Activated B cell treated with CpG ODN at 0.5 μM for 24 hours (primary cell): ENCODE measurements at regions of chr6 and their contacts with region 1.

Region 1: GRCh38 chr6:33200219-33201146 is at the starts of genes RXRB and SLC39A7:
- DNase-seq: peak; percentile 89
- ATAC-seq: peak; percentile 74
- H3K4me3 Mint-ChIP-seq: peak within 1 kb of the TSS; percentile 99
- H3K27ac Mint-ChIP-seq: peak within 1 kb of the TSS; percentile 96
- H3K4me1 Mint-ChIP-seq: peaks cover 75% of the 10 kb centered on the region
- H3K27me3 Mint-ChIP-seq: no peaks in the 10 kb centered on the region
- CTCF ChIP-seq: no peak
- total RNA-seq, gene RXRB: 72.4 and 74.3 TPM in 2 replicates
- total RNA-seq, gene SLC39A7: 31.7 and 35.2 TPM in 2 replicates

Region 2: GRCh38 chr6:31971993-31972708 is 1228.3 kb before region 1 on chr6 and contains the start of gene DXO:
- CTCF ChIA-PET with region 1: no interaction called
- POLR2A ChIA-PET with region 1: no interaction called
- intact Hi-C with region 1: loop called (anchors 10 kb)
- DNase-seq: peak; percentile 96
- ATAC-seq: peak; percentile 89
- H3K4me3 Mint-ChIP-seq: peak within 1 kb of the TSS; percentile 98
- H3K27ac Mint-ChIP-seq: peak within 1 kb of the TSS; percentile 100
- H3K4me1 Mint-ChIP-seq: peaks cover 39% of the 10 kb centered on the region
- H3K27me3 Mint-ChIP-seq: no peaks in the 10 kb centered on the region
- CTCF ChIP-seq: no peak
- total RNA-seq, gene DXO: 23.7 and 29.4 TPM in 2 replicates

Region 3: DNA sequence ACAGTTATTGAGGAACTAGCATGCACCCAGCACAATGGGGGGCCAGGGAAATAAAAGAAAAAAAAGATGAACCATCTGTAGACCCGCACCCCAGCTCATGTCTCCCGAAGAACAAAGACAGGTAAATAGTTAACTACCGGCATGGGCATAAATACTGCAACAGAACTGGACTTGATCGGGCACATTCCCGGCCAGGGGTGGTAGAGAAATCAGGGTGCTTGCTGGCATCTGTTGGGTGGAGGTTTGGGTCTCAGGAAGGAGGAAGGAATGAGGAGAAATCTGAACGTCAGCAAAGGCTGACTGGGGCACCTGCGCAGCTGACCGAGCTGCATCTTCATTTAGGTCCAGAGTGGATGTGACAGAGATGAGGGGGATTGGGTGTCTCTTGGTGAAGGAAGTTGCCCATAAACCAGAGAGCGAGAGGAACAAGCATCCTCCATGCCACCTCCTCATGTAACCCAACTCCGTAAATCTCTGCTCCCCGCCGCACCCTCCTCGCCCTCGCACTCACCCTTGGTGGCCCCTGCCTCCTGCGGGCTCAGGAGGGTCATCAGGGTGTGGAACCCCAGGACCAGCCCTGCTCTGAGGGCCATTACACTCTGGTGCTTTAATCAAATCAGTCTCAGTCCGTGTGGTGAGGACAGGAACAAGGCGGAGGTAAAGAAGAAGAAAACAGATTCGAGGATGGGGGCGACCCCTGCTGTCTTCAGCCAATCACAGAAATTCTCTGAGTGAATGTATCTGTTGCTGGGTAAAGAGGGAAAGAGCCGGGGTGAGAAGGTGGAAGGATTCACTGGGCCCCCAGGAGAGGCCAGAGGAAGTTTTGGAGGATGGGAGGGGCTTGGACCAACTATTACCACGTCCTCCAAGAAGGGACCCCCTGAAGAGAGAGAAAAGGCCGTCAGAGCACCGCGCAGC is 191.3 kb before region 1 on chr6 and contains the start of gene HLA-DOA:
- CTCF ChIA-PET with region 1: interaction called, 3 read pairs
- POLR2A ChIA-PET with region 1: interaction called, 4 read pairs
- intact Hi-C with region 1: loop called (anchors 2 kb)
- DNase-seq: peak; percentile 61
- ATAC-seq: peak; percentile 95
- H3K4me3 Mint-ChIP-seq: peak within 1 kb of the TSS; percentile 98
- H3K27ac Mint-ChIP-seq: peak within 1 kb of the TSS; percentile 95
- H3K4me1 Mint-ChIP-seq: peaks cover 57% of the 10 kb centered on the region
- H3K27me3 Mint-ChIP-seq: no peaks in the 10 kb centered on the region
- CTCF ChIP-seq: no peak
- total RNA-seq, gene HLA-DOA: 153 and 167 TPM in 2 replicates

Region 4: GRCh38 chr6:33161354-33162331 is 38.8 kb before region 1 on chr6:
- CTCF ChIA-PET with region 1: interaction called, 13 read pairs
- POLR2A ChIA-PET with region 1: interaction called, 9 read pairs
- intact Hi-C with region 1: loop called (anchors 1 kb)
- DNase-seq: peak; percentile 84
- ATAC-seq: peak; percentile 98
- H3K4me3 Mint-ChIP-seq: peak overlapping the region; percentile 92
- H3K27ac Mint-ChIP-seq: peak overlapping the region; percentile 65
- H3K4me1 Mint-ChIP-seq: peaks cover 13% of the 10 kb centered on the region
- H3K27me3 Mint-ChIP-seq: peaks cover 1% of the 10 kb centered on the region
- CTCF ChIP-seq: peak; percentile 47

Region 5: GRCh38 chr6:33288921-33289748 is 88.7 kb after region 1 on chr6 and contains the starts of genes PFDN6 and WDR46:
- CTCF ChIA-PET with region 1: no interaction called
- POLR2A ChIA-PET with region 1: interaction called, 3 read pairs
- intact Hi-C with region 1: loop called (anchors 1 kb)
- DNase-seq: peak; percentile 66
- ATAC-seq: peak; percentile 94
- H3K4me3 Mint-ChIP-seq: peak within 1 kb of the TSS; percentile 100
- H3K27ac Mint-ChIP-seq: peak within 1 kb of the TSS; percentile 95
- H3K4me1 Mint-ChIP-seq: peaks cover 48% of the 10 kb centered on the region
- H3K27me3 Mint-ChIP-seq: no peaks in the 10 kb centered on the region
- CTCF ChIP-seq: no peak
- total RNA-seq, gene PFDN6: 82.8 and 95.1 TPM in 2 replicates
- total RNA-seq, gene WDR46: 114 and 117 TPM in 2 replicates

Region 6: GRCh38 chr6:33391278-33391921 is 190.9 kb after region 1 on chr6 and contains the start of gene KIFC1:
- CTCF ChIA-PET with region 1: no interaction called
- POLR2A ChIA-PET with region 1: no interaction called
- intact Hi-C with region 1: loop called (anchors 1 kb)
- DNase-seq: peak; percentile 95
- ATAC-seq: peak; percentile 88
- H3K4me3 Mint-ChIP-seq: peak within 1 kb of the TSS; percentile 79
- H3K27ac Mint-ChIP-seq: peak within 1 kb of the TSS; percentile 95
- H3K4me1 Mint-ChIP-seq: peaks cover 25% of the 10 kb centered on the region
- H3K27me3 Mint-ChIP-seq: no peaks in the 10 kb centered on the region
- CTCF ChIP-seq: peak; percentile 77
- total RNA-seq, gene KIFC1: 1.9 and 2.2 TPM in 2 replicates